Prostate gland (tissue), 2 donors: ENCODE measurements at regions of chr2 and their contacts with region 1.

Region 1: DNA sequence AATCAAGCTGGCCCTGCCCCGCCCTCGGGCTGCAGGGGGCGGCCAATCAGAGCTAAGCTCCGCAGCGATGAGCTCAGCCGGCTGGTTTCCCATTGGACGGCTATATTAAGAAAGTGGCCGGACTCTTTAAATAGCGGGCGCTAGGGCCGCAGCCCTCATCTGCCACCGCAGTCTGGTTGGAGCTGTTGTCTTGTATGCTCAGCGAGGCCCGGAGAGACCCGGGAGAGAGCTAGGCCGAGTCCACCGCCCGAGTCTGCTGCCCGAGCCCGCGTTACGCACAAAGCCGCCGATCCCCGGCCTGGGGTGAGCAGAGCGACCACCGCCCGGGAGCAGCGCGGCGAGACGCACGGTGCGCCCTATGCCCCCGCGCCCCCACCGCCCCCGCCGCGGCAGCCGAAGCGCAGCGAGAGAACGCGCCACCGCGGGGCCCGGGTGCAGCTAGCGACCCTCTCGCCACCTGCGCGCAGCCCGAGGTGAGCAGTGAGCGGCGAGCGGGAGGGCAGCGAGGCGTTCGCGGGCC is at the start of gene RHOB:
- DNase-seq: peak; percentile 99
- H3K4me3 ChIP-seq: peak within 1 kb of the TSS; percentile 84 to 90
- H3K27ac ChIP-seq: peak within 1 kb of the TSS; percentile 98 to 100
- H3K4me1 ChIP-seq: peaks cover 6% of the 10 kb centered on the region
- H3K27me3 ChIP-seq: no peaks in the 10 kb centered on the region
- CTCF ChIP-seq: peak in 1 of 4 experiments; percentile 29
- POLR2A ChIP-seq: peak; percentile 98
- total RNA-seq, gene RHOB: 391 to 554 TPM

Region 2: GRCh38 chr2:20617892-20618467 is 171.0 kb after region 1 on chr2:
- intact Hi-C with region 1: loop called (anchors 1 kb)
- DNase-seq: peak; percentile 73
- H3K4me3 ChIP-seq: no peak overlapping the region
- H3K27ac ChIP-seq: peak overlapping the region; percentile 86
- H3K4me1 ChIP-seq: peaks cover 26% of the 10 kb centered on the region
- H3K27me3 ChIP-seq: no peaks in the 10 kb centered on the region
- CTCF ChIP-seq: peak in 2 of 4 experiments; percentile 58 to 62
- POLR2A ChIP-seq: no peak

Region 3: GRCh38 chr2:21392649-21393048 is 945.7 kb after region 1 on chr2:
- intact Hi-C with region 1: no loop called
- DNase-seq: no peak
- H3K4me3 ChIP-seq: no peak overlapping the region
- H3K27ac ChIP-seq: no peak overlapping the region
- H3K4me1 ChIP-seq: no peaks in the 10 kb centered on the region
- H3K27me3 ChIP-seq: no peaks in the 10 kb centered on the region
- CTCF ChIP-seq: no peak
- POLR2A ChIP-seq: no peak